ENCODE measurements at regions of chr1 and their contacts with region 1.

Region 1: GRCh38 chr1:207077470-207078377 is 10.9 kb upstream of the C4BPB start:
- DNase-seq: no peak
- H3K4me3 ChIP-seq: no peak overlapping the region
- H3K27ac ChIP-seq: peak overlapping the region in 1 of 8 donors; percentile 21
- H3K4me1 ChIP-seq: peaks cover 0 to 18% (median 3%) of the 10 kb centered on the region in 6 donors
- H3K27me3 ChIP-seq: no peaks in the 10 kb centered on the region
- CTCF ChIP-seq: peak; percentile 81 to 93 (median 86)
- POLR2A ChIP-seq: no peak

Region 2: GRCh38 chr1:205939690-205940330 is 1137.9 kb before region 1 on chr1:
- intact Hi-C with region 1: no loop called
- DNase-seq: no peak
- H3K4me3 ChIP-seq: no peak overlapping the region
- H3K27ac ChIP-seq: no peak overlapping the region
- H3K4me1 ChIP-seq: no peaks in the 10 kb centered on the region
- H3K27me3 ChIP-seq: peaks cover 0 to 82% (median 5%) of the 10 kb centered on the region in 7 donors
- CTCF ChIP-seq: no peak
- POLR2A ChIP-seq: no peak

Region 3: GRCh38 chr1:207004981-207005830 is 72.5 kb before region 1 on chr1:
- intact Hi-C with region 1: loop called (anchors 10 kb)
- DNase-seq: no peak
- H3K4me3 ChIP-seq: no peak overlapping the region
- H3K27ac ChIP-seq: no peak overlapping the region
- H3K4me1 ChIP-seq: peaks cover 0 to 8% (median 0%) of the 10 kb centered on the region in 6 donors
- H3K27me3 ChIP-seq: no peaks in the 10 kb centered on the region
- CTCF ChIP-seq: peak; percentile 41 to 82 (median 67)
- POLR2A ChIP-seq: no peak